ENCODE measurements at regions of chr5 and their contacts with region 1.

Region 1: DNA sequence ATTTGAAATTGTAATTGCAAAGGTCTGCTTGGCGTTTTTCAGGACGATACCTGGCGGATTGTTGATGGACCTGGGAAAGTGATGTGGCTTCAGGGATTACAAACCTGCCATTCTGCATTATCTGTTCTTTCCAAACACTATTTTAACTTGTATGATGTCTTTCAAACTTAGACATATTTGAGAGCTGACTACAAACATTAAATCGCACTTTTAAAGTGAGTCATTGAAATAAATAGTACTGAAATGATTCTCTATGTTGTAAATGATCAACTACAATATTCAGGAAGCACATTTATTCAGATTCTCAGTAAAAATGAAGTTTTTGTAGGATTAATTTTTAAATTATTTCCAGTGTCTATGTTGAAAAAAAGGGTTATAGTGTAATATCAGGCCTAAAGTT is 32.3 kb upstream of the TMEM171 start:
- DNase-seq: no peak
- H3K27ac ChIP-seq: no peak overlapping the region
- CTCF ChIP-seq: no peak

Region 2: DNA sequence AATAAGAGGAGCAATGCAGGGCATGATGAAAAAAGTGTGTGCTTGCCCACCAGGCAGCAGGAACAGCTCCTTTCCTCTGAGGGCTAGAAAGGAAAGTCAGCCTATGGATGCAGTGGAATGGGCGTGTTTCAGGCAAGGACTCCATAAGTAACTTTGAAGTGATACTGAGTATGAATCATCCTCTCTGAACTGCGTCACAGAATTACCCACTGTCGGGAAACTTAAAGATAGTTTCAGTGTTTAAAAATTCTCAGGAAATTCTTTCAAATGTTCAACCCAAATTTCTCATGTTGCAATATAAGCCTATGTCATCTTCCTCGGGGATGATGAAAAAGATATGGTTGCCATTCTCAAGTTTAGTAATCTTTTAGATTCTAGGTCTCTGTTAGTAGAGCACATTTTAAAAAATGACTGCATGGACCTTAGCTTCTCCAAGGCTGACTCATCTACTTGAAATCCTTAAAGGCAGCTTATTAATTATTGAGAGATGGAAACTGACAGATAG is 740.2 kb before region 1 on chr5:
- CTCF ChIA-PET with region 1: no interaction called
- POLR2A ChIA-PET with region 1: no interaction called
- DNase-seq: peak; percentile 93
- H3K27ac ChIP-seq: peak overlapping the region; percentile 84
- CTCF ChIP-seq: no peak

Region 3: DNA sequence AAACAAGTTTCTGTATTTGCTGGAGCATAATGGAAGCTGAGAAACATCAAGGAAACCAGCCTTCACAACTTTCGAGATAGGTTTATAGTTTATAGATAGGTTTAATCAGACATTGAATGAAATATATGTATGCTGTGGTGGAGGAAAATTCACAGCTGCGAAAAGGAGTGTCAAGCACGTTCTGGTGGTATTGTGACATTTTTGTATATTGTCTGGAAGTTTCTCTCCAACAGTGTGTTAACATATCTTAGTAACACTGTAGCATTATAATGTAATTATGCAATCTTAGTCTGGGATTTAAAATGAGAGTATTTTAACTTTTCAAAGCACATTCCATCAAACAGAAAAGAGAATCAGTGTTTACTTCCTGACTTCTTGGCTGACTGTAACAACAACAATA is 82.1 kb before region 1 on chr5:
- CTCF ChIA-PET with region 1: no interaction called
- POLR2A ChIA-PET with region 1: no interaction called
- DNase-seq: no peak
- H3K27ac ChIP-seq: no peak overlapping the region
- CTCF ChIP-seq: no peak

Region 4: GRCh38 chr5:73152411-73153388 is 64.7 kb after region 1 on chr5:
- CTCF ChIA-PET with region 1: interaction called, 14 read pairs
- POLR2A ChIA-PET with region 1: no interaction called
- DNase-seq: no peak
- H3K27ac ChIP-seq: no peak overlapping the region
- CTCF ChIP-seq: no peak

Measured in RWPE1 (cell line).